WTC11 (cell line): ENCODE measurements at regions of chr16 and their contacts with region 1.

Region 1: DNA sequence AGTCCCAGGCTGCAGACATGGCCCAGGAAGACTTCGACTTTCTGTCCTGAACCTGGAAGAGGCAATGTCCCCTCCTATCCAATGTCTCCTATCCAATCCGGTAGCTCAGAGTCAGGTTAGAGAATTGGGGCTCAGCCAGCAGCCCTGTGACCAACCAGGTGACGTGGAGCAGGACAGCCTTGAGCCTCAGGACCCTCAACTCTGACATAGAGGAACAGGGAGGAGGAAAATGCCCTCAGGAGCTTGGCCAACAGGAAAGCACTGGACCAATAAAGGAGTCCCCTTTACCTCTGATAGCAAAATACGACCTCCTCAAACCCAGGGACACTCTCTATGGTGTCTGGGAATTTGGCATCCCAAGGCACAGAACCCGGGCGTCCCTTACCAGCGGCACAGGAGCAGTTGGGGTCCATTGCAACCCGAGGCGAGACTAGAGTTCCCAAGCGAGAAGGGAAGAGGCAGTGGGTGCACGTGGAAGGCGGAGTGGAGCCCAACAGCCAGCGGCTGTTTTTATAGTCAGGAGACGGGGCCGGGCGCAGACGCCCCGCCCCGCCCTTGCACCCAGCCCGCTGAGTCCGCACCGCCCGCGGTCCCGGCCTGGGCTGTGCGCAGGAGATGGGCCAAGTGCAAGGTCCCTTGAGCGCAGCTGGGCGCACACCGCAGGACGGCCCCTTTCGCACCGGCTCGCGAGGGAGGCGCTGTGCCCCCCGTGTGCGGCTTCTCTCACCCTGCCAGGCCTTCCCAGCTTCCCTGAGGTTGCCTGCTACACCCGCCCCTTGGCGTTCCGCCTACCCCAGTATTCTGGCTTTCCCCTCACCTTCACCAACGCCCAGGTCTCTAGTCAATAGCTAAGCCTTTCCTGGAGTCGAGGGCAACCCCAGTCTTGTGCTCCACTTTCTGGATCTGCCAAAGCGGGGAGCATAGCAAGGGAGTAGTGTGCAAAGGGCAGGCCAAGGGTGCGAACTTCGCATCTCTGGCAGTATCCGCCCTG is at the start of gene MT1G:
- DNase-seq: peak; percentile 65
- ATAC-seq: peak; percentile 60
- H3K4me3 Mint-ChIP-seq: peak within 1 kb of the TSS; percentile 74
- H3K27ac Mint-ChIP-seq: no peak within 1 kb of the TSS
- H3K4me1 Mint-ChIP-seq: peaks cover 44% of the 10 kb centered on the region
- H3K27me3 Mint-ChIP-seq: peaks cover 100% of the 10 kb centered on the region
- CTCF ChIP-seq: no peak
- total RNA-seq, gene MT1G: 326 to 361 TPM (median 333 TPM) in 3 replicates

Region 2: GRCh38 chr16:56488035-56488434 is 179.8 kb before region 1 on chr16:
- CTCF ChIA-PET with region 1: no interaction called
- POLR2A ChIA-PET with region 1: no interaction called
- DNase-seq: no peak
- ATAC-seq: no peak
- H3K4me3 Mint-ChIP-seq: no peak overlapping the region
- H3K27ac Mint-ChIP-seq: no peak overlapping the region
- H3K4me1 Mint-ChIP-seq: no peaks in the 10 kb centered on the region
- H3K27me3 Mint-ChIP-seq: no peaks in the 10 kb centered on the region
- CTCF ChIP-seq: no peak

Region 3: DNA sequence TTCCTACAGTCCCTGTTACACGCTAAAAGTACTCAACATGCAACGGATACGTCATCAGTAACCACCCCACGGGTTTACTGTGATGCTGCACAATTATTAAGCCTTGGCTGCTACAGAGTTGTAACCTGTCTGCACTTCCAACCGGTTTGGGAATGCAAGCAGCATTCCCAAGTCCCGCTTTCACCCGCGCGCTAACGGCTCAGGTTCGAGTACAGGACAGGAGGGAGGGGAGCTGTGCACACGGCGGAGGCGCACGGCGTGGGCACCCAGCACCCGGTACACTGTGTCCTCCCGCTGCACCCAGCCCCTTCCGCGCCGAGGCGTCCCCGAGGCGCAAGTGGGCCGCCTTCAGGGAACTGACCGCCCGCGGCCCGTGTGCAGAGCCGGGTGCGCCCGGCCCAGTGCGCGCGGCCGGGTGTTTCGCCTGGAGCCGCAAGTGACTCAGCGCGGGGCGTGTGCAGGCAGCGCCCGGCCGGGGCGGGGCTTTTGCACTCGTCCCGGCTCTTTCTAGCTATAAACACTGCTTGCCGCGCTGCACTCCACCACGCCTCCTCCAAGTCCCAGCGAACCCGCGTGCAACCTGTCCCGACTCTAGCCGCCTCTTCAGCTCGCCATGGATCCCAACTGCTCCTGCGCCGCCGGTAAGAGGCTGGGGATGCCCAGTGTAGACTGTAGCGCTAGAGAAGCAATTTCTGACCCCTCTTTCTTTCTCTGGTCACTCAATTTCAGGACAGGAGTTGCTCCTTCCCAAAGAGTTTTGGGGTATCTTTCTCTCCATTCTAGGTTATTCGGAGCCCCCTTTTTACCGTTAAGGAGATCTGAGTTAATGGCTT is 59.6 kb before region 1 on chr16 and contains the start of gene MT2A:
- CTCF ChIA-PET with region 1: no interaction called
- POLR2A ChIA-PET with region 1: interaction called, 27 read pairs
- DNase-seq: peak; percentile 89
- ATAC-seq: peak; percentile 85
- H3K4me3 Mint-ChIP-seq: peak within 1 kb of the TSS; percentile 79
- H3K27ac Mint-ChIP-seq: peak within 1 kb of the TSS; percentile 18; the same call in 1 of the 2 replicates
- H3K4me1 Mint-ChIP-seq: peaks cover 43% of the 10 kb centered on the region
- H3K27me3 Mint-ChIP-seq: peaks cover 68% of the 10 kb centered on the region
- CTCF ChIP-seq: no peak
- total RNA-seq, gene MT2A: 139 to 173 TPM (median 149 TPM) in 3 replicates

Region 4: DNA sequence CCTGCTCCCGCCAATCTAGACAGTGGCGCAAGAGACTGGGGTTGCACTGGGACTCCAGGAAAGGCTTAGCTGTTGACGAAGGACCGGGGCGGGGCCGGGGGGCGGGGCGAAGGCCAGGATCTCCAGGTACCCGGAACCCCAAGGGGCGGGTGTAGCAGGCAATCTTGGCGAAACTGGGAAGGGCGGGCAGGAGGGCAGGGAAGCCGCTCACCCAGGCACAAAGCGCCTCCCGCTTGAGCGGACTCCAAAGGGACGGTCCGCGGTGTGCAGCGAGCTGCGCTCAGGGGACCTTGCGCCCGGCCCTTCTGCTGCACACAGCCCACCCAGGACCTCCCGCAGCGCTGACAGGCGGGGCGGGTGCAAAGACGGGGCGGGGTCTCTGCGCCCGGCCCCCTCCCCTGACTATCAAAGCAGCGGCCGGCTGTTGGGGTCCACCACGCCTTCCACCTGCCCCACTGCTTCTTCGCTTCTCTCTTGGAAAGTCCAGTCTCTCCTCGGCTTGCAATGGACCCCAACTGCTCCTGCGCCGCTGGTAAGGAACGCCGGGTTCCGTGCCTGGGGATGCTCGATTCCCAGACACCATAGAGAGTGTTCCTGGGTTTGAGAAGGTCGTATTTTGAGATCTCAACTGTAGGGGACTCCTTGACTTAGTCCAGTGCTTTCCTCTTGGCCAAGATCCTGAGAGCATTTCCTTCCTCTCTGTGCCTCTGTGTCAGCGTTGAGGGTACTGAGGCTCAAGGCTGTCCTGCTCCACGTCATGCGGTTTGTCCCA is 10.1 kb before region 1 on chr16 and contains the start of gene MT1F:
- CTCF ChIA-PET with region 1: interaction called, 3 read pairs
- POLR2A ChIA-PET with region 1: interaction called, 10 read pairs
- DNase-seq: peak; percentile 92
- ATAC-seq: peak; percentile 88
- H3K4me3 Mint-ChIP-seq: peak within 1 kb of the TSS; percentile 95
- H3K27ac Mint-ChIP-seq: peak within 1 kb of the TSS; percentile 74; the same call in 1 of the 2 replicates
- H3K4me1 Mint-ChIP-seq: peaks cover 26% of the 10 kb centered on the region
- H3K27me3 Mint-ChIP-seq: peaks cover 85% of the 10 kb centered on the region
- CTCF ChIP-seq: no peak
- total RNA-seq, gene MT1F: 50.6 to 60.2 TPM (median 58.2 TPM) in 3 replicates

Region 5: GRCh38 chr16:56681939-56682702 is 14.2 kb after region 1 on chr16 and contains the start of gene MT1X:
- CTCF ChIA-PET with region 1: no interaction called
- POLR2A ChIA-PET with region 1: interaction called, 44 read pairs
- DNase-seq: peak; percentile 85
- ATAC-seq: peak; percentile 89
- H3K4me3 Mint-ChIP-seq: peak within 1 kb of the TSS; percentile 88
- H3K27ac Mint-ChIP-seq: peak within 1 kb of the TSS; percentile 75
- H3K4me1 Mint-ChIP-seq: peaks cover 42% of the 10 kb centered on the region
- H3K27me3 Mint-ChIP-seq: peaks cover 17% of the 10 kb centered on the region
- CTCF ChIP-seq: no peak
- total RNA-seq, gene MT1X: 328 to 466 TPM (median 465 TPM) in 3 replicates